BJ (cell line): ENCODE measurements at regions of chr17 and their contacts with region 1.

Region 1: GRCh38 chr17:37650419-37651003 is 7.3 kb upstream of the DDX52 start:
- DNase-seq: peak; percentile 9
- H3K4me3 ChIP-seq: no peak overlapping the region
- H3K27me3 ChIP-seq: no peaks in the 10 kb centered on the region
- CTCF ChIP-seq: peak; percentile 59

Region 2: DNA sequence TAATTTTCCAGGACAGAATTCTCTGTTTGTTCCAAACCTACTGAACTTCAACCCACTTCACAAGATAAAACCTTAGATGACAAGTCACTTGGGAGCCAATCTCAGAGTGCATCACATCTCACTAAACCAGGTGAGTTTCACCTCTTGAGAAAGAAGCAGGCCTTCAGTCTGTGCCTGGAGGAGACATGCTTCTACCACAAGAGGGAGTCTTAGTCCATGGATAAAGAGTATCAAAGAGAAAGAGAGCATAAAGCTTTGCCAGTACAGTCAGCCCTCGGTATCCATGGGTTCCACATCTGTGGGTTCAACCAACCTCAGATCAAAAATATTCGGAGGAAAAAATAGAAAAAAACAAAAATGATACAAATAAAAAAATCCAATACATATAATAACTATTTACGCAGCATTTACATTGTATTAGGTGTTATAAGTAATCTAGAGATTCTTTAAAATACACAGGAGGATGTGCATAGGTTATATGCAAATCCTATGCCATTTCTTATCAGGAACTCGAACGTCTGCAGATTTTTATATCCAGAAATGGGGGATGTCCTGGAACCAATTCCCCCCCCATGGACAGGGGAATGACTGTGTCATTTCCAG is 123.2 kb before region 1 on chr17:
- CTCF ChIA-PET with region 1: no interaction called
- POLR2A ChIA-PET with region 1: no interaction called
- DNase-seq: no peak
- H3K4me3 ChIP-seq: no peak overlapping the region
- H3K27me3 ChIP-seq: no peaks in the 10 kb centered on the region
- CTCF ChIP-seq: peak; percentile 78

Region 3: DNA sequence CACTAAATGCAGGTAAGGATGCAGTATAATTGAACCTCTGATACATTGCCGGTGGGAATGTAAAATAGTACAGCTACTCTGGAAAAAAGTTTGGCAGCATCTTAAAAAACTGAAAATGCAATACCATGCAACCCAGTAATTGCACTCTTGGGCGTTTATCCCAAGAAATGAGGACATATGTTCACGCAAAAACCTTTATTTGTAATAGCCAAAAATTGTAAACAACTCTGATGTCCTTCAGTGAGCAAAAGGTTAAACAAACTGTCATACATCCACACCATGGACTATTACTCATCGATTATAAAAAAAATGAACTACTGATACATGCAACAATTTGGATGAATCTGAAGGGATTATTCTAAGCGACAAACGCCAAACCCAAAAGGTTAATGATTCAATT is 58.2 kb before region 1 on chr17:
- CTCF ChIA-PET with region 1: no interaction called
- POLR2A ChIA-PET with region 1: no interaction called
- DNase-seq: no peak
- H3K4me3 ChIP-seq: no peak overlapping the region
- H3K27me3 ChIP-seq: no peaks in the 10 kb centered on the region
- CTCF ChIP-seq: no peak

Region 4: DNA sequence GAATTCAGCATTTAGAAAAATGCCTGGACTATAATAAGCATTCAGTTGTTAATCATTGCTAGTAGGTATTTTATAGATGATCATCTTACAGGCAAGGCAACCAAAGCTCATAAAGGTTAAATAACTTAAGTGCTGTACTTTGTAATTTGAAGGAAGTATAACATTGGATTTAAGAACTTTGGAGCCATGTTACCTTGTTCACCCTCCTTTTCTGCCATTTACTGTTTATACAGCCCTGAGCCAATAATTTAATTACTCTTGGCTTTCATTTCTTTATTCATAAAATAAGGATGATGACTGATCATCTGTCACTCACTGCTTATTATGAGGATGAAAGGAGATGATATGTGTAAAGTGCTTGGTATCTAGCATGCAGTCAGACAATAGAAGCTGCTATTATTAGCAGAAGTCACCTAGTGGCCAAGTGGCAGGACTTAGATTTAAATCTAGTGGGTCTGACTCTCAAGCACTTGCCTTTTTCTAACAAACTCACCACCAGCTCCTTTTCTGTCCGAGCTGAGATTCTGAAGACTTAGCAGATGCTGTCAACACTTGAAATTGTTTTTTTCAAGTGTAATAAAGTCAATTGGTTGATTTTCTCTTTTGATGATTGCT is 11.0 kb after region 1 on chr17:
- CTCF ChIA-PET with region 1: interaction called, 45 read pairs
- POLR2A ChIA-PET with region 1: no interaction called
- DNase-seq: no peak
- H3K4me3 ChIP-seq: no peak overlapping the region
- H3K27me3 ChIP-seq: no peaks in the 10 kb centered on the region
- CTCF ChIP-seq: no peak

Region 5: GRCh38 chr17:37764383-37764782 is 113.9 kb after region 1 on chr17:
- CTCF ChIA-PET with region 1: interaction called, 115 read pairs
- POLR2A ChIA-PET with region 1: no interaction called
- DNase-seq: no peak
- H3K4me3 ChIP-seq: no peak overlapping the region
- H3K27me3 ChIP-seq: no peaks in the 10 kb centered on the region; the same call in 1 of the 2 replicates
- CTCF ChIP-seq: no peak